Activated T-helper 2 cell treated with anti-CD3 and anti-CD28 coated beads, Interferon-gamma antibody, Interleukin-2, Interleukin-4, amounts not matched to agents 10 μg/mL and 5 μg/mL and 100 μg/mL, durations not matched to agents 14 hours and 24 hours and 36 hours (primary cell): ENCODE measurements at regions of chr5 and their contacts with region 1.

Region 1: GRCh38 chr5:134086943-134087305 is 27.6 kb upstream of the TCF7 start:
- DNase-seq: peak; percentile 76
- H3K4me3 Mint-ChIP-seq: peak overlapping the region; percentile 31
- H3K27ac Mint-ChIP-seq: peak overlapping the region; percentile 76
- H3K4me1 Mint-ChIP-seq: peaks cover 46% of the 10 kb centered on the region
- H3K27me3 Mint-ChIP-seq: peaks cover 57% of the 10 kb centered on the region

Region 2: GRCh38 chr5:134070725-134071613 is 16.0 kb before region 1 on chr5:
- intact Hi-C with region 1: loop called (anchors 1 kb)
- DNase-seq: no peak
- H3K4me3 Mint-ChIP-seq: peak overlapping the region; percentile 27
- H3K27ac Mint-ChIP-seq: peak overlapping the region; percentile 48
- H3K4me1 Mint-ChIP-seq: peaks cover 34% of the 10 kb centered on the region
- H3K27me3 Mint-ChIP-seq: peaks cover 59% of the 10 kb centered on the region

Region 3: GRCh38 chr5:134113902-134114875 is 27.3 kb after region 1 on chr5 and contains the start of gene TCF7:
- intact Hi-C with region 1: loop called (anchors 1 kb)
- DNase-seq: peak; percentile 61
- H3K4me3 Mint-ChIP-seq: peak within 1 kb of the TSS; percentile 76
- H3K27ac Mint-ChIP-seq: peak within 1 kb of the TSS; percentile 28
- H3K4me1 Mint-ChIP-seq: peaks cover 48% of the 10 kb centered on the region
- H3K27me3 Mint-ChIP-seq: peaks cover 36% of the 10 kb centered on the region
- total RNA-seq, gene TCF7: 8.4 and 10.0 TPM in 2 replicates

Region 4: DNA sequence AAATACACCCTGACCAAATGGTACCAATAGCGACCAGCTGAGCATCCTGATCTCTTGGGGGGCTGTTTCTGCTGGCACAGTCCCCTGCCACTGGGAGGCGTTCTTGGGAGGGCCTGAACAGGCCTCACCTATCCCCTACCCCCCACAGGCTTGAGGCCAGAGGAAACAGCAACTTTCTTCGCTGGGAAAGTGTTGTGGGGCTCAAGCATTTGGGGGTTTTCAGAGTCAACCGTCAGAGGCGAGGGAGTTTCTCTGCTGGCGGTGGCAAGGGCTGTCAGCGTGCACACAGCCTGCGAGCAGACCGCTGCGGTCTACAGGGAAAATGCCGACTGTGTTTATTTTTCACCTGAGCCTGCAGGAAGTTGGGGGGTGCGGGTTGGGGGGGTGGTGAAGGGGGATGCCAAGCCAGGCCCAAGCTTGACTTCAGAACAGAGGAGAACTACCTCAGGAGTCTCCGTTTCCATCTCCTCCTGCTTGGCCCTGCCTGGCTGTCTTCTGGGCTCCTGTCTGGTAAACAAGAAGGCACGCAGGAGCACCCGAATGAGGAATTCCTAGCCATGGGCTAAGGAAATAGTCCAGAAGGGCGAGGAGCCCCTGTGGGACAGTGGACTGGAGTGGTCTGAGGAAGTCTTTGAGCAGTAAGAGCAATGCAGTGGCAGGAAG is 45.6 kb after region 1 on chr5:
- intact Hi-C with region 1: loop called (anchors 2 kb)
- DNase-seq: peak; percentile 53
- H3K4me3 Mint-ChIP-seq: peak overlapping the region; percentile 27
- H3K27ac Mint-ChIP-seq: peak overlapping the region; percentile 55
- H3K4me1 Mint-ChIP-seq: peaks cover 62% of the 10 kb centered on the region
- H3K27me3 Mint-ChIP-seq: peaks cover 14% of the 10 kb centered on the region